ENCODE measurements at regions of chr15 and their contacts with region 1.

Region 1: GRCh38 chr15:78177447-78177873 is 28.3 kb downstream of the IDH3A start:
- DNase-seq: peak; percentile 36 to 88
- H3K4me3 ChIP-seq: no peak overlapping the region
- H3K27ac ChIP-seq: no peak overlapping the region
- H3K4me1 ChIP-seq: no peaks in the 10 kb centered on the region
- H3K27me3 ChIP-seq: no peaks in the 10 kb centered on the region
- CTCF ChIP-seq: peak; percentile 91 to 96 (median 91)
- EP300 ChIP-seq: no peak
- POLR2A ChIP-seq: no peak
- RAD21 ChIP-seq: peak; percentile 94 to 96

Region 2: DNA sequence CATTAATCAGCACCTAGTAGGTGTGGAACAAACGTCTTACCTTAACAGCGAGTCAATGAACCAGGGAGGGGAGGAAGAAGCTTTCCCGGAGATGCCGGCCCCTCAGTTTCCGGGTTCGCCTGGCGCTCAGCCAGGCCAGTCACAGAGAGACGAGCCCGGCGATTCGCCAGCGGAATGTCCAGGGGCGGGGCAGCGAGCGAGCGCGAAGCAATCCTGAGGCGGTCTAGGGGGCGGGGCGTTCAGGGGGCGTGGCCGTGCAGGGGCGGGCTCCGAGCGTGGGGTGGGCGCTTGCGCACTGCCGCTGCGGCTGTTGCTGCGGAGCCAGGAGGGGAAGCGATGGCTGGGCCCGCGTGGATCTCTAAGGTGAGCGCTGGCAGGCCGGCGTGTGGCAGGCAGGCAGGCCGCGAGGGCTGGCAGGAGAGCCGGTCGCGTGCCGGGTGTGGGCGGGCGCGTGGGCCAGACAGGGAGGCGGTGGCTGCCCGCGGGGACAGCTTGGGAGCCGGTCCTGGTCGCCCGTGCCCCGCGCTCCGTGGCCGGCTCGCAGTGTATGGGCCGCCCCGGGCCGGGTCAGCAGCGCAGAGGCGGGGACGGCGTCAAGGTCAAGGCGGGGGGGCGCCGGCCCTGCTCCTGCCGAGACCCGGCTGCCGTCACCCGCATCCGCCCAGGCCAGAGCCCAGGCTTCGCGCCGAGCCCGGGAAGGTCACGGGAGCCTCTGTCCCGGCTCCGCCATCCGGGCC is 28.2 kb before region 1 on chr15 and contains the start of gene IDH3A:
- CTCF ChIA-PET with region 1: interaction called, 11 read pairs
- POLR2A ChIA-PET with region 1: no interaction called
- DNase-seq: peak; percentile 84 to 100
- H3K4me3 ChIP-seq: peak within 1 kb of the TSS; percentile 47 to 79 (median 61)
- H3K27ac ChIP-seq: no peak within 1 kb of the TSS
- H3K4me1 ChIP-seq: peaks cover 0 to 4% (median 0%) of the 10 kb centered on the region in 4 experiments; a peak in 2 of 7 replicates
- H3K27me3 ChIP-seq: no peaks in the 10 kb centered on the region; a peak in 1 of 7 replicates
- CTCF ChIP-seq: no peak
- EP300 ChIP-seq: no peak
- POLR2A ChIP-seq: peak; percentile 17 to 76
- RAD21 ChIP-seq: no peak
- total RNA-seq, gene IDH3A: 36.8 and 41.5 TPM in 2 replicates

Region 3: GRCh38 chr15:78195735-78196201 is 18.3 kb after region 1 on chr15:
- CTCF ChIA-PET with region 1: interaction called, 239 read pairs
- POLR2A ChIA-PET with region 1: no interaction called
- DNase-seq: peak in 1 of 2 experiments; percentile 61
- H3K4me3 ChIP-seq: no peak overlapping the region
- H3K27ac ChIP-seq: no peak overlapping the region
- H3K4me1 ChIP-seq: no peaks in the 10 kb centered on the region
- H3K27me3 ChIP-seq: no peaks in the 10 kb centered on the region
- CTCF ChIP-seq: peak; percentile 87 to 93 (median 90)
- EP300 ChIP-seq: no peak
- POLR2A ChIP-seq: no peak
- RAD21 ChIP-seq: peak; percentile 86 to 87

Region 4: DNA sequence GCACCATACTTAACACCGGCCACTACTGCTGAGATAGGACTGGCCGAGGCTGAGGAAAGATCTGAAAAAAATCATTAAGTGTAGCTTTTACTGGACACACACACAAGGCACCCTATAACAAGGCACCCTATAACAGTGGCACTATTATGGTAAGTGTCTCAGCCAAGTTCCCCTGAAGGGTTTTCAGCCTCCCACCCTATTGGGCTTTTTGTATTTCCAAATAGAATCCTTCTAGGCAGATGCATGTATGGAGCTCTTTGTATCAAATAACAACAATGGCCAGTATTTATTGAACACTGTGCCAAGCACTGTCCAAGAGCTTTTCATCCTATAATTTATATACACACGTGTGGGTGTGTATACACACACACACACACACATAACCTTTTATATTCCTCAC is 80.2 kb after region 1 on chr15:
- CTCF ChIA-PET with region 1: interaction called, 10 read pairs
- POLR2A ChIA-PET with region 1: no interaction called
- DNase-seq: no peak
- H3K4me3 ChIP-seq: no peak overlapping the region
- H3K27ac ChIP-seq: no peak overlapping the region
- H3K4me1 ChIP-seq: no peaks in the 10 kb centered on the region
- H3K27me3 ChIP-seq: no peaks in the 10 kb centered on the region; a peak in 1 of 7 replicates
- CTCF ChIP-seq: no peak
- EP300 ChIP-seq: no peak
- POLR2A ChIP-seq: no peak
- RAD21 ChIP-seq: no peak

Region 5: DNA sequence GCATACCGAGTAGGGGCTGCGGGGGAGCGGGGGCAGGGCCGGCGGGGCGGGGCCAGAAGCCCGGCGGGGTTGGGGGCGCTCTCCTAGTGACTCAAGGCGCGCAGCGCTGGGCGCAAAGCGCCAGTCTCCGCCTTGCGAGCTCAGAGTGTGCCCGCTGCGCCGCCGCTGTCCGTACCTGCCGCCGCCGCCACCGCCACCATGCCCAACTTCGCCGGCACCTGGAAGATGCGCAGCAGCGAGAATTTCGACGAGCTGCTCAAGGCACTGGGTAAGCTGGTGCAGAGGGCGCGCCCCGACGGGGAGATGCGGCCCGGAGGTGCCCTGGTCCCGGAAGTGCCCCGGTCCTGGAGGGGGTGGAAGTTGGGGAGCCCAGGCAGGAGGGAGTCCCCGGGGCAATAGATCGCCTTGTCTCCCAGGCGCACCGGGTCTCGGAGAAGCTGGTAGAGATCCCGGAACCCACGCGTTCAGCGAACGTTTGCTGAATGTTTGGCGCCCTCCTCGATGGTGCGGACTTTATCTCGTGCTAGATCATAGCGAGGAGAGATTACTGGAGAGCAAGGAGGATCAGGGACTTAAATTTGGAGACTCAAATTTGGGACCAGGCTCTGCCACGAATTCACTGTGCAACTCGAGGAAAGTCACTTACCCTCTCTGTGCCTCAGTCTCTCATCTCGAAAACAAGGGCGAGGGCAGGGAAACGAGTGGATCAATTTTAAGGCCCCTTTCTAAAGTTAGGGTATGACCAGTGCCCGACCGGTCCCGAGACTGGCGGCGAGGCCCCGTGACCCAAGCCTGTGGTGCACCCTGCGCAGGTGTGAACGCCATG is 163.0 kb after region 1 on chr15 and contains the start of gene CRABP1:
- CTCF ChIA-PET with region 1: no interaction called
- POLR2A ChIA-PET with region 1: no interaction called
- DNase-seq: peak in 1 of 2 experiments; percentile 84
- H3K4me3 ChIP-seq: peak within 1 kb of the TSS; percentile 39 to 78 (median 66)
- H3K27ac ChIP-seq: no peak within 1 kb of the TSS
- H3K4me1 ChIP-seq: peaks cover 2 to 17% (median 8%) of the 10 kb centered on the region in 4 experiments; a peak in 5 of 7 replicates
- H3K27me3 ChIP-seq: peaks cover 0 to 24% (median 16%) of the 10 kb centered on the region in 4 experiments; a peak in 5 of 7 replicates
- CTCF ChIP-seq: no peak
- EP300 ChIP-seq: no peak
- POLR2A ChIP-seq: peak; percentile 42 to 64; a peak in 2 of 3 replicates
- RAD21 ChIP-seq: 0 out of 4 replicates have a peak, but pooled peaks of 1 of the 2 experiments have one; percentile 12
- total RNA-seq, gene CRABP1: 385 and 388 TPM in 2 replicates

Measured in H1 (cell line).